GM18951 (cell line): ENCODE measurements at regions of chr11 and their contacts with region 1.

Region 1: GRCh38 chr11:20387241-20388095 is at the start of gene PRMT3:
- POLR2A ChIP-seq: peak; percentile 90

Region 2: GRCh38 chr11:20609727-20610707 is 222.5 kb after region 1 on chr11:
- in situ Hi-C with region 1: loop called (anchors 10 kb)
- POLR2A ChIP-seq: no peak